Left lung (tissue), 14 donors: ENCODE measurements at regions of chr16 and their contacts with region 1.

Region 1: DNA sequence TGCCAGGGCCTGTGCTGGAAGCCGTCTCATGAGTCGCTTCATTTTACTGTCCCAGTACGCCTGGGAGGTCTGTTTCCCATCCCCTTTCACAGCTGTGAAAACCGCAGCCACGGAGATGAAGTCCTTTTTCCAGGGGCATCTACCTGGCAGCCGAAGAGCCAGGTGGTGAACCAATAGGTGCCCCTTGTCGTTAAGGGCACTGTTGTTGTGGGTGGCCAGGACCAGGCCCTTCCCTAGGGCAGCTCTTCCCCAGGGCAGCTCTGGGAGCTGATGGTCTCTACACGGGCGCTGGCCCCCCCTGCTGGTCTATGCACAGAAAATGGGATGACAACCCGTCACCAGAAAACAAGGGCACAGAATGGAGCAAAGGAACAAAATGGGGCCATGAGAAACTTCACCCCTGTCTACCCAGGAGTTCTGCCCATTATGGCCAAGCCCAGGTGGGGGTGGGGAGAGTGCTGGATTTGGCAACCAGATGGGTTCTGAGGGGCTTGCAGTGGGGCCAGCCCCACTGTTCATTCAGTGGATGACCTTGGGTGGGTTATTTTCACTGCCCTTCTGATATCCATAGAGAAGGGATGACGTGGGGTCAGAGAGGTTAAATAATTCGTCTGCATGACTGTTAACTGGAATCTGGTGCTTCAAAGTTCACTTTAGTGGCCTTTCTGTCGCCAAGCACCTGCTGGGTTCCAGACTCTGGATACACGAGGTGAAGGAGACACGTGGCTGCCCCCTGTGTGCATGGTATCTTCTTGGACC is 11.5 kb downstream of the RMI2 start:
- DNase-seq: peak; percentile 57 to 86 (median 80)
- ATAC-seq: peak; percentile 85
- H3K4me3 ChIP-seq: no peak overlapping the region
- H3K27ac ChIP-seq: no peak overlapping the region
- H3K4me1 ChIP-seq: peaks cover 14 to 52% of the 10 kb centered on the region in 2 donors
- H3K27me3 ChIP-seq: peaks cover 0 to 37% of the 10 kb centered on the region in 2 donors
- CTCF ChIP-seq: peak; percentile 57 to 66

Region 2: DNA sequence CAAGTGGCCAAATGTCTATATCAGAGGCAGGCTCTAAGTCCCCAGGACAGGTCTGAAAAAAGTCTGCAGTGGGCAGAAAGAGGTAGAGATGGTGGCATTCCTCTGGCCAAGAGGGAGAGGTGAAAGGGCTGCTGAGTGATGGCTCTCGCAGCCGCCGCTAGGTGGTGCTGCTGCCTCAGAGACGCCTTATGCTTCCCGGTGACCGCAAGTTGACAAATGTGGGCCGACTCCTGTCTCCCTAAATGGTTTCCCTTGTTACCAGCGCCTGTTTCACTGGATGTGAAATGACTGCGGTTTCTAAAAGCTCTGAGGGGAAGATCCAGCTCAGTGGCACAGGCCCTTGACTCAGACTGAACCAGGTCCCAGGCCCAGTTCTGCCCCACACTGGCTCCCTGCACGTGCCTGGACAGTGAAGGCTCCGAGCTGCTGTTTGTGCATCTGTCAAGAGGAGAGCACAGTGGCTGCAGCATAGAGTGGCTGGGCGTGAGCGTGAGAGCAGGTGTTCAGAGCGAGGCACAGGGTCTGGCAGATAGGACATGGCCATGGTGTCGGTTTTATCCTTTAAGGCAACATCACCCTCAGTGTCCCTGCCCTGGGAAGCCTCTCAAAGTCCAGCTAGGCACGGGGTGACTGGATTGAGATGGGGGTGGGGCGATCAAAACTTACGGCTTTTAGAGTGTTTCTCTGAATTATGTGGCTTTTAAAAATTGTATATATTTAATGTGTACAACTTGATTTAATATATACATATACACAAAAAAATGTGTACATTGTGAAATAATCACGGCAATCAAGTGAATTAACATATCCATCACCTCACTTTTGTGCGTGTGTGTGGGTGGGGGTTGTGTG is 392.5 kb before region 1 on chr16:
- intact Hi-C with region 1: loop called in 1 of 2 experiments (anchors 10 kb)
- DNase-seq: peak; percentile 78 to 96 (median 88)
- ATAC-seq: peak; percentile 97
- H3K4me3 ChIP-seq: no peak overlapping the region
- H3K27ac ChIP-seq: no peak overlapping the region
- H3K4me1 ChIP-seq: peaks cover 0 to 28% of the 10 kb centered on the region in 2 donors
- H3K27me3 ChIP-seq: no peaks in the 10 kb centered on the region
- CTCF ChIP-seq: peak; percentile 97 to 98

Region 3: GRCh38 chr16:10971560-10971961 is 385.2 kb before region 1 on chr16:
- intact Hi-C with region 1: loop called (anchors 5 to 10 kb)
- DNase-seq: peak in 2 of 4 donors; percentile 84 to 91
- ATAC-seq: peak; percentile 91
- H3K4me3 ChIP-seq: no peak overlapping the region
- H3K27ac ChIP-seq: peak overlapping the region in 1 of 2 donors; percentile 47
- H3K4me1 ChIP-seq: peaks cover 10 to 32% of the 10 kb centered on the region in 2 donors
- H3K27me3 ChIP-seq: no peaks in the 10 kb centered on the region
- CTCF ChIP-seq: peak; percentile 48 to 72